MCF 10A (cell line): ENCODE measurements at regions of chr11 and their contacts with region 1.

Region 1: GRCh38 chr11:14300661-14301304 is 58.2 kb downstream of the RRAS2 start:
- DNase-seq: peak; percentile 75
- H3K4me3 Mint-ChIP-seq: no peak overlapping the region
- H3K27ac Mint-ChIP-seq: no peak overlapping the region
- H3K4me1 Mint-ChIP-seq: peaks cover 6% of the 10 kb centered on the region
- H3K27me3 Mint-ChIP-seq: no peaks in the 10 kb centered on the region
- CTCF ChIP-seq: peak; percentile 82

Region 2: DNA sequence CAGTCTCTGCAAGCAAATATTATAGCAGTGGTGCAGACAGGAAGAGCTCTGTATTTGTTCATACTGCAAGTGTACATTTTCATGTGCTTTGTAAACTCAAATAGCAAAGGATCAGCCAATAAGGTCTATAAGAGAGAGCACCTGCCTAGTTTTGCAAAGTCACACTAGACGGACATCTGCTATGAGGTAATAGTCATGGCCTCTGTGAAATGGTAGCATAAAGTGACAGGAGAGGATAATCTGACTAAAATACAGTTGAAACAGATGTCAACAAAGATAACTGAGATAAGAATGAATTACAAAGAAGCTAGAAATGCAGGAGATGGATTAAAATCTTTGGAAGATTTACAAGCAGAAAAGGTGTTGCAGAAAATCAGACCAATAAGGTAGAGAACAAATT is 408.9 kb before region 1 on chr11:
- CTCF ChIA-PET with region 1: no interaction called
- POLR2A ChIA-PET with region 1: no interaction called
- intact Hi-C with region 1: no loop called
- DNase-seq: no peak
- H3K4me3 Mint-ChIP-seq: no peak overlapping the region
- H3K27ac Mint-ChIP-seq: no peak overlapping the region
- H3K4me1 Mint-ChIP-seq: no peaks in the 10 kb centered on the region
- H3K27me3 Mint-ChIP-seq: no peaks in the 10 kb centered on the region
- CTCF ChIP-seq: no peak

Region 3: GRCh38 chr11:14320020-14320419 is 19.2 kb after region 1 on chr11:
- CTCF ChIA-PET with region 1: interaction called, 11 read pairs
- POLR2A ChIA-PET with region 1: interaction called, 5 read pairs
- intact Hi-C with region 1: no loop called
- DNase-seq: no peak
- H3K4me3 Mint-ChIP-seq: no peak overlapping the region
- H3K27ac Mint-ChIP-seq: no peak overlapping the region
- H3K4me1 Mint-ChIP-seq: peaks cover 36% of the 10 kb centered on the region
- H3K27me3 Mint-ChIP-seq: no peaks in the 10 kb centered on the region
- CTCF ChIP-seq: no peak

Region 4: DNA sequence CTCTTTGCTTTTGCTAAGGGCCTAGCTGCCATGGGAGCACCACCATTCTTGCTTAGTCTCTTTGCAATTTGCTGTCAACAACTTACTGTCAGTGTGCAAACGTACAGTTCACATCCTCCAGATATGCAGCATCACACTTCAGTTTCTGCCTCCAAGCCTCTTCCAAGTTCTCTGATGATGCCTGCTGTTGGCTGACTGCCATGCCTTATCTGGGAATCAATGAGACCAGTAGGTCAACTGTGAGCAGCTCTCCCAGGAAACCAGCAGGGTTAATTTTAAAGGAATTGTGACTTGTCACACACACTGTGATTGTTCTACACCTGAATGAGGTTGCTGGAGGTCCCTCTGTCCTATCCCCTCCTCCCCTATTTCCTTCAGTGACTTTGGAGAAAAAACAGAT is 142.9 kb after region 1 on chr11:
- CTCF ChIA-PET with region 1: interaction called, 13 read pairs
- POLR2A ChIA-PET with region 1: interaction called, 10 read pairs
- intact Hi-C with region 1: no loop called
- DNase-seq: peak; percentile 33
- H3K4me3 Mint-ChIP-seq: no peak overlapping the region
- H3K27ac Mint-ChIP-seq: no peak overlapping the region
- H3K4me1 Mint-ChIP-seq: peaks cover 8% of the 10 kb centered on the region
- H3K27me3 Mint-ChIP-seq: no peaks in the 10 kb centered on the region
- CTCF ChIP-seq: no peak

Region 5: DNA sequence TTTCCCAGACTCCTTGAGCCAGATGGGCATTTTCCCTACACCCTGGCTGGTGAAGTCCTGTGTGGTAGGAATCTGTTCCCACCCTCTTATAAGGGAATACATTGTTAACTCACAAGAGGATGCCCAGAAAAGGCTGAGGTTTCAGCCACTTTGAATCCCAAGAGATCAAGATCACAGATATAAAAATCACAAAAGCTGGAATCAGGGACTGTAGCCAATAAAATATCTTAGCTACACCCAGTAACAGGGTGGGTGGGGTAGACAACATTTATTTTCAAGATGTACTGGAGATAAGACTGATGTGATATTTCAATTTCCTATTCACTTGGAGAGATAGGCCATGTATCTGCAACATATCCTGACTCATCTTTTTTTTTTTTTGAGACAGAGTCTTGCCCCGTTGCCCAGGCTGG is 148.5 kb after region 1 on chr11:
- CTCF ChIA-PET with region 1: interaction called, 179 read pairs
- POLR2A ChIA-PET with region 1: interaction called, 16 read pairs
- intact Hi-C with region 1: no loop called
- DNase-seq: no peak
- H3K4me3 Mint-ChIP-seq: no peak overlapping the region
- H3K27ac Mint-ChIP-seq: no peak overlapping the region
- H3K4me1 Mint-ChIP-seq: peaks cover 8% of the 10 kb centered on the region
- H3K27me3 Mint-ChIP-seq: no peaks in the 10 kb centered on the region
- CTCF ChIP-seq: no peak